ENCODE measurements at regions of chr17 and their contacts with region 1.

Region 1: DNA sequence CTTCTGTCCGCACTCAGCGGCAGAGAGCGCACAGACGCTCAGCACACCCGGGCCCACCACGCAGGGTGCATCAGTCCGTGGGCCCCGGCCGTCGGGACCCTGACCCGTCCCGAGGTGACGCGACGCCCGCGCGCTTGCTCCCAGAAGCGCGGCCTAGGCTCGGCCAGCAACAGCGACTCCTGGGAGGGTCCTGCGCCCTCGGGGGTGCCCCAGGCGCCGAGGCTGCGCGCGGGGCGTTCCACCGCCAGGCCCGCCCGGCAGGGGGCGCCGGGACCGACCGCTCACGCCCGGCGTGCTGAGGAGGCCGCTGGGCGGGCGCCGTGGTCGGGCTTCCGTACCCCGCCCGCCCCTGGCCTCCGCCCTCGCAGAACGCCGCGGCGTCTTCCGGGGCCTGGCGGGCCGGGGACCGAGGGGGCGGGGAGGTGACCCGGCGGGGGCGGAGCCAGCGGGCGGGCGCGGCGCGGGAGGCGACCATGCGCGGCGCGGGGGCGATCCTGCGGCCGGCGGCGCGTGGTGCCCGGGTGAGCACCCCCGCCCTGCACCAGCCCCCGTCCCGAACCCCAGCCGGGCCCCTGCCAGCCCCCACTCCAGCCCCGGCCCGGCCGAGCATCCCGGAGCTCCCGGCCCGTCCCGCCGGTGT is at the start of gene CISD3:
- DNase-seq: peak; percentile 81
- H3K4me3 Mint-ChIP-seq: peak within 1 kb of the TSS; percentile 87
- H3K27ac Mint-ChIP-seq: peak within 1 kb of the TSS; percentile 87
- H3K4me1 Mint-ChIP-seq: peaks cover 18% of the 10 kb centered on the region
- H3K27me3 Mint-ChIP-seq: no peaks in the 10 kb centered on the region
- CTCF ChIP-seq: peak; percentile 41
- total RNA-seq, gene CISD3: 36.8 and 42.0 TPM in 2 replicates

Region 2: GRCh38 chr17:38674749-38675615 is 55.0 kb before region 1 on chr17 and contains the start of gene EPOP:
- CTCF ChIA-PET with region 1: interaction called, 37 read pairs
- POLR2A ChIA-PET with region 1: interaction called, 16 read pairs
- intact Hi-C with region 1: loop called (anchors 1 kb)
- DNase-seq: peak; percentile 82
- H3K4me3 Mint-ChIP-seq: peak within 1 kb of the TSS; percentile 64
- H3K27ac Mint-ChIP-seq: no peak within 1 kb of the TSS
- H3K4me1 Mint-ChIP-seq: peaks cover 13% of the 10 kb centered on the region
- H3K27me3 Mint-ChIP-seq: peaks cover 2% of the 10 kb centered on the region
- CTCF ChIP-seq: no peak
- total RNA-seq, gene EPOP: 3.4 and 3.6 TPM in 2 replicates

Region 3: DNA sequence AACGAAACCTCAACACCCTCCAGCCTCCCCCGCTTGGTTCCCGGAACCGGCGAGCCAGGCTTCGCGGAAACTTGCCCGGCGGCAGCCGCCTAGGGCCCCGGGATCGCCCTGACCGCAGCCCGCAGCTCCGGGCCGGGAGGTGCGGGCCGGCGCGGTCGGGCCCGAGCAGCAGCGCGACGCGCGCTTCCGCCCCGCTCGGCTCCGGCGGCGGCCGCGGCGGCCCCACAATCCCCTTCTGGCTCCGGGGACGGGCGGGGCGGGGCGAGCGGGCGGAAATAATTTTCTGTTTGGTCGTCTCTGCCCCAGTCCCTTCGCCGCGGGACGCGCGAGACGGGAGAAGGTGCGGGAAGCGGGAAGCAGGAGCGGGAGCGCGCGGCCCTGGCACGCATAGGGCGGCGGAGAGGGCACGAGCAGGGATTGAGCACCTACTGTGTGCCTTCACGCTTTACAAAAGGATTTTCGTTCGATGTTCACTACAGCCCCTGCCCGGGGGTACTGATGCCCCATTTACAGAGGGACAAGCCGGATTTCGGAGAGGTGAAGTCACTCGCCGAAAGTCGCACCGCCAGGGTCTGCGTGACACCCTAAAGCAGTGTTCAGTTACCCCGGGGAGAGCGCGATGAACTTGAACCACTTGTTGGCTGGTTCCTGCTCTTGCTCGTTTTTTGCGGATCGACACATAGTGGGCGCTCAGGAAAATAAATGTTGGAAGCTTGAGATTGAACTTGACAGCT is 27.7 kb before region 1 on chr17:
- CTCF ChIA-PET with region 1: interaction called, 4 read pairs
- POLR2A ChIA-PET with region 1: interaction called, 29 read pairs
- intact Hi-C with region 1: no loop called
- DNase-seq: peak; percentile 88
- H3K4me3 Mint-ChIP-seq: peak overlapping the region; percentile 99
- H3K27ac Mint-ChIP-seq: peak overlapping the region; percentile 75
- H3K4me1 Mint-ChIP-seq: peaks cover 17% of the 10 kb centered on the region
- H3K27me3 Mint-ChIP-seq: peaks cover 10% of the 10 kb centered on the region
- CTCF ChIP-seq: no peak

Region 4: DNA sequence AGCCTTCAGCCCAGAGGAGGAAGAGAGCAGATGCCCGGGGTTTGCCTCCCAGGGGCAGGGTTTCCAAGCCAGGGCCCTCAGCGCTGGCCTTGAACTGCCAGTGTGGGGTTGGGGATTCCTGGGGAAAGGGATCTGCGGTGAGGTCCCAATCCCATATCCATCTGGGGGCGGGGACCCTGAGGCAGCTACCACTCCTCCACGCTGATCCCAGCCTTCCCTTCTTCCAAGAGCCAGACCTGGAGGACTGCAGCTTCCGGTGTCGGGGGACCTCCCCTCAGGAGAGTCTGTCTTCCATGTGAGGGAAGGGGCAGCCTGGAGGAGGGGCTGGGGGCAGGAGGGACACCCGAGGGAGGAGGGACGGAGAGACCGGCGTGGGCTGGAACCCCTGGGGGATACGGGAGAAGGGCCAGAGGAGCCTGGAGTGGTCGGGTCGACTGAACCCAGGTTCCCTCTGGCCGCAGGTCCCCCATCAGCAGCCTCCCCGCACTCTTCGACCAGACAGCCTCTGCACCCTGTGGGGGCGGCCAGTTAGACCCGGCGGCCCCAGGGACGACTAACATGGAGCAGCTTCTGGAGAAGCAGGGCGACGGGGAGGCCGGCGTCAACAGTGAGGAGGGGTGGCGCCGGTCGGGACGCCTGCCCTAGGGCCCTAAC is 10.6 kb before region 1 on chr17:
- CTCF ChIA-PET with region 1: interaction called, 8 read pairs
- POLR2A ChIA-PET with region 1: interaction called, 12 read pairs
- intact Hi-C with region 1: no loop called
- DNase-seq: no peak
- H3K4me3 Mint-ChIP-seq: no peak overlapping the region
- H3K27ac Mint-ChIP-seq: no peak overlapping the region
- H3K4me1 Mint-ChIP-seq: no peaks in the 10 kb centered on the region
- H3K27me3 Mint-ChIP-seq: no peaks in the 10 kb centered on the region
- CTCF ChIP-seq: no peak

Region 5: DNA sequence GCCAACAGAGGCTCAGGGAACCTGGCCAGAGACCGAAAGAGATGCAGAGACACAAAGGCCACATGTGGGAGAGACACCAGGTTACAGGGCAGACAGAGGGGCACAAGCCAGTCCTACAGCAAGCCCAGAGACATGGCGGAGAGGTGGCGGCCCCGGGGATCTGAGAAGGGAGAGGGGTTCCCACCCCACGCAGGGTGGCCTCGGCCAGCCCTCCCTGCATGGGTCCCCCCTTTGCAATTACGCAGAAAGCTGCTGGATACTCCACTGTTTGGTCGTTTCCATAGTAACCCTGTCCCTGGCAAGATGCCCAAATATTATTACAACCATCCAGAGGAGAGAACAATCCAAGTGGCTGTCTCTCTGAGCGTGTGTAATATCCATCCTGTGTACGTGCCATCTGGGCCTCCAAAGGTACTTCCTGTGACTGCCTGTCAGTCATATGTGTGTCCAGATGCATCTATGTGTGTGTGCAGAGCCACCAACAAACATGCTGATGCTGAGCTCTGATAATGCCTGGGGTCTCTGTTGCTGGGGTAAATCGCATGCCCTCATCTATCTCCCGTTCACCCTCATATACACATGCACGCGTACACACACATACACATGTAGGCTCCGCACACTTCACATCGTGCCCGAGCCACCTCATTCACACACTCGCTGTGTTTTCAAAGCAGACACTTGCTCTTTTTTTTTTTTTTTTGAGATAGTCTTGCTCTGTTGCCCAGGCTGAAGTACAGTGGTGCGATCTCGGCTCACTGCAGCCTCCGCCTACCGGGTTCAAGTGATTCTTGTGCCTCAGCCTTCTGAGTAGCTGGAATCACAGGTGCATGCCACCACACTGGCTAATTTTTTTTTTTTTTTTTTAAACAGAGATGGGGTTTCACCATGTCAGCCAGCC is 12.7 kb after region 1 on chr17:
- CTCF ChIA-PET with region 1: interaction called, 45 read pairs
- POLR2A ChIA-PET with region 1: interaction called, 11 read pairs
- intact Hi-C with region 1: no loop called
- DNase-seq: peak; percentile 36
- H3K4me3 Mint-ChIP-seq: no peak overlapping the region
- H3K27ac Mint-ChIP-seq: peak overlapping the region; percentile 62
- H3K4me1 Mint-ChIP-seq: peaks cover 36% of the 10 kb centered on the region
- H3K27me3 Mint-ChIP-seq: no peaks in the 10 kb centered on the region
- CTCF ChIP-seq: no peak

Region 6: DNA sequence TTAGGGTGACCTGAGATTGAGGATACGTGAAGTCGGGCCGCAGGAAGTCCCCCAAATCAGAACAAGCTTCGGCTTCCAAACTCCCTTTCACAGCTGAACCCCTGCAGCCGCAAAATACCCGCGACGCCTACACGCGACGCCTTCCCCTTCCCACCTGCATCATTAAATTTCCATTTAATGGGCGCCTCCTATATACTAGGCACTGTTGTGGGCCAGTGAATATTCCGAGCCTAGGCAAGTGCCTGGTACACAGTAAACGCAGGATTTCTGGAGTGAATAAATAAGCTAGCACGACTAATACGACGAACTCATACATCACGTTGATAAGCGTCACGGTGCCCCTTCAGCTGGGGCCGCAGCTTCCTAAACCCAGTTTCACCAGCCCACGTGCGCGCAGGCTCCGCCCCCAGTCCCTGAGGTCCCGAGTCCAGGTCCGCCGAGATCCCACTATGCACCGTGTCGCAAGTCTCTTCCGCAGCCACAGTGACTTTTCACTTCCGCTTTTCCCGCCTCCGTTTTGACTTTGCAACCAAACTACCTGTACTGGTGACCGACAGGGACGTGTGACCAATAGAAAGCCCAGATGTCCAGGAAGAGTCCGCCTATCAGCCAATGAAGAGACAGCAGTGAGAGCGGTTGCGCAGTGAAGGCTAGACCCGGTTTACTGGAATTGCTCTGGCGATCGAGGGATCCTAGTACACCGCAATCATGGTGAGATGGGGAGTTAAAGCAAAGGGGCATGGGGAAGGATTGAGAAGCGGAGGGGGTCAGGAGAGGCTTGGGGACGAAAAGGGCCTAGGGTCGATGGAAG is 22.3 kb after region 1 on chr17 and contains the start of gene PSMB3:
- CTCF ChIA-PET with region 1: interaction called, 45 read pairs
- POLR2A ChIA-PET with region 1: interaction called, 46 read pairs
- intact Hi-C with region 1: no loop called
- DNase-seq: peak; percentile 99
- H3K4me3 Mint-ChIP-seq: peak within 1 kb of the TSS; percentile 96
- H3K27ac Mint-ChIP-seq: peak within 1 kb of the TSS; percentile 98
- H3K4me1 Mint-ChIP-seq: peaks cover 28% of the 10 kb centered on the region
- H3K27me3 Mint-ChIP-seq: no peaks in the 10 kb centered on the region
- CTCF ChIP-seq: no peak
- total RNA-seq, gene PSMB3: 124 and 145 TPM in 2 replicates

Region 7: GRCh38 chr17:39045948-39046679 is 316.1 kb after region 1 on chr17:
- CTCF ChIA-PET with region 1: no interaction called
- POLR2A ChIA-PET with region 1: no interaction called
- intact Hi-C with region 1: no loop called
- DNase-seq: no peak
- H3K4me3 Mint-ChIP-seq: no peak overlapping the region
- H3K27ac Mint-ChIP-seq: peak overlapping the region; percentile 91
- H3K4me1 Mint-ChIP-seq: no peaks in the 10 kb centered on the region
- H3K27me3 Mint-ChIP-seq: peaks cover 9% of the 10 kb centered on the region
- CTCF ChIP-seq: no peak

Measured in MCF 10A (cell line).